Ovary (tissue), 10 donors: ENCODE measurements at regions of chr5 and their contacts with region 1.

Region 1: GRCh38 chr5:14739538-14739937 is 75.0 kb downstream of the OTULIN start:
- DNase-seq: no peak
- H3K4me3 ChIP-seq: no peak overlapping the region
- H3K27ac ChIP-seq: no peak overlapping the region
- H3K4me1 ChIP-seq: no peaks in the 10 kb centered on the region
- H3K27me3 ChIP-seq: no peaks in the 10 kb centered on the region
- CTCF ChIP-seq: no peak
- EP300 ChIP-seq: no peak
- POLR2A ChIP-seq: no peak

Region 2: GRCh38 chr5:14869668-14870164 is 130.2 kb after region 1 on chr5:
- intact Hi-C with region 1: loop called in 1 of 4 experiments (anchors 10 kb)
- DNase-seq: no peak
- H3K4me3 ChIP-seq: peak overlapping the region; percentile 72
- H3K27ac ChIP-seq: no peak overlapping the region
- H3K4me1 ChIP-seq: peaks cover 4% of the 10 kb centered on the region
- H3K27me3 ChIP-seq: no peaks in the 10 kb centered on the region
- CTCF ChIP-seq: no peak
- EP300 ChIP-seq: no peak
- POLR2A ChIP-seq: no peak

Region 3: GRCh38 chr5:16271861-16272260 is 1532.3 kb after region 1 on chr5:
- intact Hi-C with region 1: no loop called
- DNase-seq: no peak
- H3K4me3 ChIP-seq: no peak overlapping the region
- H3K27ac ChIP-seq: no peak overlapping the region
- H3K4me1 ChIP-seq: no peaks in the 10 kb centered on the region
- H3K27me3 ChIP-seq: no peaks in the 10 kb centered on the region
- CTCF ChIP-seq: no peak
- EP300 ChIP-seq: no peak
- POLR2A ChIP-seq: no peak